Activated T-helper 2 cell treated with anti-CD3 and anti-CD28 coated beads, Interferon-gamma antibody, Interleukin-2, Interleukin-4, amounts not matched to agents 10 μg/mL and 5 μg/mL and 100 μg/mL, durations not matched to agents 14 hours and 24 hours and 36 hours (primary cell): ENCODE measurements at regions of chr2 and their contacts with region 1.

Region 1: GRCh38 chr2:236968101-236968879 is 117.4 kb upstream of the COPS8 start:
- DNase-seq: no peak
- H3K4me3 Mint-ChIP-seq: no peak overlapping the region
- H3K27ac Mint-ChIP-seq: no peak overlapping the region
- H3K4me1 Mint-ChIP-seq: peaks cover 35% of the 10 kb centered on the region
- H3K27me3 Mint-ChIP-seq: peaks cover 6% of the 10 kb centered on the region

Region 2: GRCh38 chr2:236352761-236353593 is 615.3 kb before region 1 on chr2:
- intact Hi-C with region 1: no loop called
- DNase-seq: no peak
- H3K4me3 Mint-ChIP-seq: no peak overlapping the region
- H3K27ac Mint-ChIP-seq: no peak overlapping the region
- H3K4me1 Mint-ChIP-seq: peaks cover 4% of the 10 kb centered on the region
- H3K27me3 Mint-ChIP-seq: no peaks in the 10 kb centered on the region

Region 3: GRCh38 chr2:236956038-236956618 is 12.2 kb before region 1 on chr2:
- intact Hi-C with region 1: no loop called
- DNase-seq: no peak
- H3K4me3 Mint-ChIP-seq: no peak overlapping the region
- H3K27ac Mint-ChIP-seq: no peak overlapping the region
- H3K4me1 Mint-ChIP-seq: peaks cover 15% of the 10 kb centered on the region
- H3K27me3 Mint-ChIP-seq: peaks cover 3% of the 10 kb centered on the region

Region 4: DNA sequence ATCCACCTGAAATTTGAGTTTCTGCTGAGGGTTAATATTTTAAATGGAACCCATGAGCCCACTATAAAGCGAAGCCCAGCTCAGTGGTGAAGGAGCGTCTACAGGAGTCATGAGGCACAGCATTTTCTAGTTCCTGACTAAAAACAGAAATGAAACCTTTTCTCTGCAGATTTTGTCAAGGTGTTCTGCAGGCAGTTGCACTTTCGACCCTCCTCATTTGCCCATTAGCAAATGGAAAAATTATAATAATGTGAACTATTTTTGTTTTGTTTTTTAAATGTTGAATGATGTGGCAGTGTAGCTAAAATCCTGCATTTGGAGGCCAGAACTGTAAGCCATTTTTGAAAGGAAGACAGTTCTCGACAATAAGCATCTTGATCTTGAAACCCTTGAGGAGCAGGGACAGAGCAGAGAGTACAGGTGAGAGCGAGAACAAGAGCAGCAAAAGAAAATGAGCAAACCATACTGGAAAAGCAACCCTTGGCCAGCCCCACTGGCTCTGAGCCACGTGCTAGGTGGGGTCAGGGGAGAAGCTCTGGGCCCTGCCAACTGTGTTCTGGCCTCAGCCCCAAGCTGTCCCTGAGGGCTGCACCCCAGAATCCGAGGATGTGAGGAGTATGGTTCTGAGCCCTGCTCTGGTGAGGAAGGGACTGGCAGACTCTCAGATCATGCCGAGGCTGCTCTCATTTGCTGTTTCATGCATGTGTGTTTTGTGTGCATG is 91.0 kb after region 1 on chr2:
- intact Hi-C with region 1: loop called (anchors 5 kb)
- DNase-seq: no peak
- H3K4me3 Mint-ChIP-seq: no peak overlapping the region
- H3K27ac Mint-ChIP-seq: peak overlapping the region; percentile 67
- H3K4me1 Mint-ChIP-seq: peaks cover 15% of the 10 kb centered on the region
- H3K27me3 Mint-ChIP-seq: peaks cover 1% of the 10 kb centered on the region